ENCODE measurements at regions of chr10 and their contacts with region 1.

Region 1: GRCh38 chr10:13439313-13440184 is 89.3 kb downstream of the BEND7 start:
- DNase-seq: no peak
- H3K4me3 ChIP-seq: no peak overlapping the region
- CTCF ChIP-seq: no peak
- POLR2A ChIP-seq: no peak

Region 2: DNA sequence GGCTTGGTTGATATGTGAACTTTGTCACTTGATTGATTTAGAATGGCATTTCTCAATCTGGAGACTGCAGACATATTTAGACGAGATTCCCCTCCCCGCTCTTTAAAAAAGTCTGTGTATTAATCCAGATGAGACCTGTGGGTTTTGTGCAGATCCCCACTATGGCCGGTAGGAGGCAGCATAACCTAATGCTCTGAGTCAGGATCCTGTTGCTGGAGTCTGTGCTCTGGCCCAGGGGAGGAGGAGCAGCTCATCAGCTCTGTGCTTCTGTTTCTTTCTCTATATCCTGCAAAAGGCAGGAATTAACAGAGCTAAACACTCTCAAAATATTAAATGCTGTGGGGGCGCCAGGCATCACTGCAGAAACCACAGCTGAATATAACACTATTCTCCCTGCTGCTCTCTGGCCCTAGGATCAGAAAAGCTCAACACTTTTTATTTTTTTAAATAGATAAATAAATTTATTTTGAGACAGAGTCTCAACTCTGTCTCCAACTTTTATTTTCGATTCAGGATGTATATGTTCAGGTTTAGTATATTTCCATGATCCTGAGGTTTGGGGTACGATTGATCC is 67.6 kb before region 1 on chr10:
- intact Hi-C with region 1: loop called (anchors 10 kb)
- DNase-seq: peak; percentile 68 to 89
- H3K4me3 ChIP-seq: no peak overlapping the region
- CTCF ChIP-seq: peak in 1 of 3 donors; percentile 63
- POLR2A ChIP-seq: no peak

Region 3: GRCh38 chr10:13971601-13972475 is 532.3 kb after region 1 on chr10:
- intact Hi-C with region 1: no loop called
- DNase-seq: no peak
- H3K4me3 ChIP-seq: no peak overlapping the region
- CTCF ChIP-seq: no peak
- POLR2A ChIP-seq: no peak